ENCODE measurements at regions of chr17 and their contacts with region 1.

Region 1: DNA sequence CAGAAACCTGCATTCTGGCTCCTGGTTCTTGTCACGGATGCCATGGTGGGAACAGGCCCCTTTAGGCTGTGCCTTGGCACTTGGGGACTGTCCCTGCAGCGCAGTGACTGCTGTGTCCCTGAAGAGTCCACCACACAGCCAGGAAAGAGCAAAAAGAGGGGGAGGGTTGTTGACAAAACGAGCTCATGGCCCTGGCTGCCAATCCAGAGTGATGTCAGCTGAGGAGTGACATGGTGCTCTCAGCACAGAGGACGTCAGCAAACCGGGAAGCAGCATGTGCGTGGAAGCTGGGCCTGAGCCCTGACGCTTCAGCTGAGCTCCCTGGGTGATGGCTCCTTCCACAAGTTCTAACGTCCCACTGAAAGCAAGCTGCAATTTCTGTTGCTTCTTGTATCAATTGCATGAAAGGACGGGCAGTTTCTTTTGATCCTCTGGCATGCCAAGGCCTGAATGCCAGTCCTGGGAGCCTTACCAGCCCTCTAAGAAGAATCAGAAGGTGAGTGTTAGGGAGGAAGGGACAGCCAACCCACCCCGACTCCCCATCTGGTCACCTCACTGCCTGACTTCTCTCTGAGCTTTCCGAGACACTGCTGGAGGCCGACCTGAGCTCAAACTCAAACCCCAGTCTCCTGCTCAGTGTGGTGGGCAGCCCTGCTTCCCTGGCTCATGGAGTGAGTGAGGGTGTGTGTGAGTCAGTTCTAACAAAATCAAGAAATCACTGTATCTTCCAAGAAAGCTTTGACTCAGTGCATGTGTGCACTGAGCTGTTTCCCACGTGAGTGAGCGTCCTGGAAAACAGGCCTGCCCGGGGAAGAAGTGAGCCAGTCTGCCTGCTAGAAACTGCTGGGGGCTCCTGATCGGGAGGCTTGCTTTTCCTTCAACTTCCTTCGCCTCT is 14.7 kb upstream of the WNT3 start:
- DNase-seq: no peak
- H3K4me3 Mint-ChIP-seq: no peak overlapping the region
- H3K27ac Mint-ChIP-seq: no peak overlapping the region
- H3K4me1 Mint-ChIP-seq: peaks cover 5% of the 10 kb centered on the region
- H3K27me3 Mint-ChIP-seq: peaks cover 6% of the 10 kb centered on the region

Region 2: DNA sequence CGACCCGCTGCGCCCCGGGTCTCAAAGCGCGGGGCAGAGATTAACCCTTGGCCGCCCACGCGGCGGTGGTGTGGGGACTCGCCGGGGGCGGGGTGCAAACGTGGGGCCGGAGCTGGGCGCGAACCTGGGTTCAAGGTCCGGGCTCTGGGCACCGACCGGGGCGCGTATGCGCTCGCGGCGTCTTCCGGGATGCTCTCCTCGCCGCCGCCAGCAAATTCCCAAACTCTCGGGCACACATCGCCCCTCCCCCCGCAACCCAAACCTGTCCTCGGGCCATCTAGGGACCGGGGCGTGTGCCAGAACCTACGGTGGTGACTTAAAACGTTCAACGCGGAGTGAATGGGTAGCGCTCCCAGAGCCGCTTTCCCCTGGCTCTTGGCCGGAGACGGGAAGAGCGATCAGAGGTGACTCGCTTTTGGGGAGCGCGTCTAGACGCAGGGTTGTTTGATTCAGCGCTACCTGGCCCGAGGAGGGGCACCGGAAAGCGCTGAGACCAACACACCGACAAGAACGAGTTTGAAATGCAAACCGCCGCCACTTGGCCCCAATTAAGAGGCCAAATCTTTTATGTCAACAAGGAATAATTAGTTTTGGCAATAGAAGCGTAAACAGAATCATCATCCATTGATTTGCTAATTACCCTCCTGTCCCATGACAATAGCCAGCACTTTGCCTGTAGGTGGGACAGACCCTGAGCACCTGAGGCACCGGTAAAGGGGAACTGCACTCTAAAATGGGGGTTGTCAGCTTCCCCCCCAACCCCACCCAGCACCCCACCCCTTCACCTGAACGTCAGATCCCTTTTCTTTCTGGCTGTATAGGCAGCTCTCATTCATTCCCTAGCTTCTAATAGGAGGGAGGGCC is 60.9 kb before region 1 on chr17:
- CTCF ChIA-PET with region 1: interaction called, 3 read pairs
- intact Hi-C with region 1: loop called (anchors 2 kb)
- DNase-seq: peak; percentile 28
- H3K4me3 Mint-ChIP-seq: peak overlapping the region; percentile 69
- H3K27ac Mint-ChIP-seq: no peak overlapping the region
- H3K4me1 Mint-ChIP-seq: peaks cover 12% of the 10 kb centered on the region
- H3K27me3 Mint-ChIP-seq: peaks cover 30% of the 10 kb centered on the region

Region 3: DNA sequence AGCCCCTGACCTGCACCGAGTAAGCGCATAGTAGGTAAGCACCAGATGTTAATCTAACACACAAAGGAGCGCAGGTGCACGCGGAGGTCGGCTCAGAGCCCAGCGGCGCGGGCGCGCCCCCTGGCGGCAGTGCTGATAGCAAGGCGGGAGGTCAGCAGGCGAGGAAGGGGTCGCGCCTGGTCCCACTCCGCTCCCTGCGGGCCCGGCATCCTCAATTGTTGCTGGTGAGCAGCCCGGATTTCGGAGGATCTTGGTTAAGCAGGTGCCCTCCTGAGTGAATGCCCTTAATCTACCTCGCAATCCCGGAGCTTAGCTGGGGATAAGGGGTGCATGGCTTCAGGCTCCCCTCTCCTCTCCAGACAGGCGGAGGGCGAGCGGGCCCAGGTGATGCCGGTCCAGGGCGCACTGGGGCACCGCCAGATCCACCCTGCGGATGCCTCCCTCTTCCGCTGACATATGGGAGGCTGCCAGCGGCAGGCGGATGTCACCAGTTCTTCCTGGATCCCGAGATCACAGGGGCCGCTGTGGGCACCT is 10.7 kb before region 1 on chr17:
- CTCF ChIA-PET with region 1: interaction called, 13 read pairs
- intact Hi-C with region 1: no loop called
- DNase-seq: peak; percentile 59
- H3K4me3 Mint-ChIP-seq: no peak overlapping the region
- H3K27ac Mint-ChIP-seq: no peak overlapping the region
- H3K4me1 Mint-ChIP-seq: peaks cover 13% of the 10 kb centered on the region
- H3K27me3 Mint-ChIP-seq: peaks cover 43% of the 10 kb centered on the region

Region 4: GRCh38 chr17:46851029-46851741 is 18.0 kb after region 1 on chr17 and contains the start of gene WNT9B:
- CTCF ChIA-PET with region 1: no interaction called
- intact Hi-C with region 1: no loop called
- DNase-seq: peak; percentile 27
- H3K4me3 Mint-ChIP-seq: peak within 1 kb of the TSS; percentile 59
- H3K27ac Mint-ChIP-seq: no peak within 1 kb of the TSS
- H3K4me1 Mint-ChIP-seq: peaks cover 6% of the 10 kb centered on the region
- H3K27me3 Mint-ChIP-seq: peaks cover 60% of the 10 kb centered on the region
- total RNA-seq, gene WNT9B: not detected